Activated CD4-positive, alpha-beta T cell treated with anti-CD3 and anti-CD28 coated beads, Interleukin-2, amount 10 ng/mL, durations not matched to agents 7 days and 5 days (primary cell): ENCODE measurements at regions of chr1 and their contacts with region 1.

Region 1: DNA sequence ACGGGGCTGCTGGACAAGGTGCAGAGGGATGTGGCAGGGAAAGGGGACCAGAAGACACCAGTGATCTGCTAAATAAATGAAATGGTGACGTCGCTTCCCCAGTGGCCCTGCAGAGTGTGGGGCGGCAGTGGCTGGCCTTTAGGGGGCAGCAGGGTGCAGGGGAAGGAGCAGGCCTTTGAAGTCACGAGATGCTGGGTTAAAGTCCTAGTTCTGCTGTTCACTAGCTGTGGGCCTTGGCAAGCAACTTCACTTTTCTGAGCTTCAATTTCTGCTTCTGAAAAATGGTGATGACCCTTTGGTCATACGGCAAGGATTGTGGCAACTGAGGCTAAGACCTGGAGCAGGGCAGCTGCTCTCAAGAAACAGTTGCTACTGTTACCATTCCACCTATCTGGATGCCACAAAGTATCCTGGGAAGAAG is 9.2 kb upstream of the GALE start:
- DNase-seq: peak; percentile 89
- H3K4me3 Mint-ChIP-seq: no peak overlapping the region
- H3K27ac Mint-ChIP-seq: no peak overlapping the region
- H3K4me1 Mint-ChIP-seq: peaks cover 20% of the 10 kb centered on the region
- H3K27me3 Mint-ChIP-seq: no peaks in the 10 kb centered on the region

Region 2: DNA sequence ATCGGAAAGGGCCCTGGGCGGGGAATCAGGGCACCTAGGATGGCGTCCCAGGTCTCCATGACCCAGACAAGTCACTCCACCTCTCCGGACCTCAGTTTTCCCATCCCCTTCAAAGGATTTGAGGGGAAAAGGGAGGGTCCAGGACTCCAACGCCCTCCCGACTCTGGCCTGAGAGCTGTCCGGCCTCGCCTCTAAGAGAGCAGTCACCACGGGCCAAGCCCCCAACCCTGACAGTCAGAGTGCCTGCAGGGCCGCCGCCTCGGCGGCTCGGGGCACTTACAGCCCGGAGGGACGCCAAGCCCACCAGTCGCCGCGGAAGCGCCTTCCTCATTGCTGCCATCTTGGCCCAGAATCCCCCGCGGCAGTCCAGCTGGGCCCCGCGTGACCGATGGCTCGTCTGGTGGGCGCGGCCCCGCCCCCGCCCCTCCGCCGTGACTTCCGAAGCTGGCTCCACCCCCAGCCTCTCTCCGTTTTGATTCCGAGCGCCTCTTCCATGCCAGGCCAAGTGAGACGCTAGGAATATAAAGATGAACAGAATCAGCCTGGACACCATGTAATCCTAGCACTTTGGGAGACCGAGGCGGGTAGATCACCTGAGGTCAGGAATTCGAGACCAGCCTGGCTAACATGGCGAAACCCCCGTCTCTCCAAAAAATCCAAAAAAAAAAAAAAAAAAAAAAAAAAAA is 15.5 kb after region 1 on chr1 and contains the start of gene HMGCL:
- CTCF ChIA-PET with region 1: interaction called, 29 read pairs
- POLR2A ChIA-PET with region 1: no interaction called
- DNase-seq: peak; percentile 91
- H3K4me3 Mint-ChIP-seq: peak within 1 kb of the TSS; percentile 83
- H3K27ac Mint-ChIP-seq: peak within 1 kb of the TSS; percentile 94
- H3K4me1 Mint-ChIP-seq: peaks cover 21% of the 10 kb centered on the region
- H3K27me3 Mint-ChIP-seq: no peaks in the 10 kb centered on the region
- total RNA-seq, gene HMGCL: 22.1 to 25.2 TPM

Region 3: GRCh38 chr1:23916209-23917131 is 106.7 kb after region 1 on chr1:
- CTCF ChIA-PET with region 1: interaction called, 16 read pairs
- POLR2A ChIA-PET with region 1: no interaction called
- DNase-seq: peak; percentile 64
- H3K4me3 Mint-ChIP-seq: no peak overlapping the region
- H3K27ac Mint-ChIP-seq: no peak overlapping the region
- H3K4me1 Mint-ChIP-seq: peaks cover 31% of the 10 kb centered on the region
- H3K27me3 Mint-ChIP-seq: no peaks in the 10 kb centered on the region